Activated CD4-positive, alpha-beta T cell treated with anti-CD3 and anti-CD28 coated beads for 36 hours (primary cell): ENCODE measurements at regions of chr14 and their contacts with region 1.

Region 1: DNA sequence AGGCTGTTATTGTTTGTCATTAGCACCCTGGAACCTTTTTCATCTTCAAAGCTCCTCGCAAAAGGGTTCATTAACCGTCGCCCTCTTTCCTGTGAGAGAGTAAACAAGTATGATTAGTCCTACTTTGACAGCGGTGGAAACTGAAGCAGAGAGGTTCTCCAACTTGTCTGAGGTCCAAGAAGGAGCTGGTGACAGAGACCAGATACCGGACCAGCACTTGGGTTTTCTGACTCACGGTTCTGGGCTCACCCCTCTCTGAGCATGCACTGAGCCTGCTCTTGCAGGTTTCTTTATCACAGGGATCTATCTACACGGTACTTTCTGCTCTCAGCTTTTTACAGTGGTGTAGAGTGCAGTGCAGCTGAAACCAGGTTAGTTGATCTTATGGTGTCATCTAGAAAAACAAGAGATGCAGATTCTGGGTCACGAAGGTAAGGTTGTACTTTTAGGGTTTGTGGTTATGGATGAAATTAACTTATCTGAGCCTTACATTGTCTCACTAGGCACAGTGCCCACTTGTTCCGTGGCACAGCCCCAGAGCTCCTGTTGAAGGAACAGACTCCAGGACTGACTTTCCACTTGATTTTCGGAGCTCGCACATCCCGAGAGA is 62.1 kb downstream of the PPP2R5C start:
- DNase-seq: peak; percentile 87
- ATAC-seq: peak; percentile 80
- H3K4me3 Mint-ChIP-seq: peak overlapping the region; percentile 68
- H3K27ac Mint-ChIP-seq: peak overlapping the region; percentile 97
- H3K4me1 Mint-ChIP-seq: peaks cover 87% of the 10 kb centered on the region
- H3K27me3 Mint-ChIP-seq: no peaks in the 10 kb centered on the region

Region 2: DNA sequence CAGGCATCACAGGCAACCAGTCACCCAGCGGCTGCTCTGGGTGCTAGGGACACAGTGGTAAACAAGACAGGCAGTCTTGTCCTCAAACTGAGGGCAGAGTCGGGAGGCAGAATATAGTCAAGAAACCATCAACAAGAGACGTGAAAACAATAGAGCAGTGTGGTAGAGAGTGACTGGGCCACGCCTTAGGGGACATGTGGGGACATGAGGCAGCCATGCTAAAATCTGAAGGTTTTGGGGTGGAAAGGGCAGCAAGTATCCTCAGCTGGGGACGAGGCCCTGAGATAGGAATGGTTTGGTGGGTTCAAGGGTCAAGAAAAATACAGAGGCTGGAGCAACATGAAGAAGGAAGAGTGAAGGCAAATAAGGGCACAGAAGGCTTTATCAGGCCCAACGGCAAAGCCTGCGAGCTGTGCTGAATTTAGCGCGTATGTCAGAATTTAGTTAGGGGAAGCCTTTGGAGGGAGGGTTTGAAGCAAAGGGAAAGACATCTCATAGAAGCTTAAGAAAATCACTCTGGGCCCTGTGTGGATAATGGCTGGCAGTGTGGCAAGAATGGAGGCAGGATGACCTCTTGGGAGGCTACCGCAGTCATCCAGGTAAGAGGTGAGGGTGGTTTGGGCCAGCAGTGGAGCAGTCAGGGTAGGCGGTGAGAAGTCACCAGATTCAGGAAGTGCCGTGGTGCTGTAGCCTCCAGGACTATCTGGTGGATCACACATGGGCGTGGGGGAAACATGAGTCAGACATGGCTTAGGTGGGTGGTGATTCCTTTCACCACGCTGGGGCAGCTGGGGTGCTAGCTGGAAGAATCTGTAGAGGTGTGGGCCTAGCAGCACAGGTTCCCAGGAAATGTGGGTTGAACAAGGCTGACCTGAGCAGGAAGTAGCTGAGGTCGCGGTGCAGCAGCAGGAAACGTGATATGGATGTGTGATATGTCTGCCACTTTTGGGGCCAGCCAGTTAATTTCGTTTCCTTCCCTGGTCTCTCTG is 1755.4 kb before region 1 on chr14:
- CTCF ChIA-PET with region 1: no interaction called
- POLR2A ChIA-PET with region 1: interaction called, 4 read pairs
- intact Hi-C with region 1: loop called in 1 of 2 experiments (anchors 5 kb)
- DNase-seq: peak; percentile 93
- ATAC-seq: peak; percentile 38
- H3K4me3 Mint-ChIP-seq: peak overlapping the region; percentile 75
- H3K27ac Mint-ChIP-seq: peak overlapping the region; percentile 99
- H3K4me1 Mint-ChIP-seq: peaks cover 64% of the 10 kb centered on the region
- H3K27me3 Mint-ChIP-seq: no peaks in the 10 kb centered on the region

Region 3: DNA sequence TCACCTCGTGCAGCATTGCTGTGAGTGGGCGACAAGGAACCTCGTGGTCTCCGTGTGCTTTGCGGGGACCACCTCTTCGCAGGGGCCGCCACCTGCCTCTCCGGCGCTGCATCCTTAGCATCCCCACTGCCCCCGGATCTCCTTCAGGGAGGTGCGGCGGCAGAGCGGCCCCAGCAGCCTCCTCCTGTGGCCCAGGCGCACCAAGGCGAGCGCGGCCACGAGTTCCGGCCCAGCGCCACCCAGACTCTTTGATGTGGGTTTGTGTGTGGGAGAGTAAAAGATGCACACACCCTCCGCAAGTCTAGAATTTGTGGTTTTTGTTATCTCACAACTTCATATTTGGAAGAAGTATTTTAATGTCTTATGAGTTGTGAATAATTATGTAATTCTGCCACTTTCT is 381.2 kb before region 1 on chr14:
- CTCF ChIA-PET with region 1: no interaction called
- POLR2A ChIA-PET with region 1: no interaction called
- intact Hi-C with region 1: no loop called
- DNase-seq: peak; percentile 76
- ATAC-seq: peak; percentile 83
- H3K4me3 Mint-ChIP-seq: no peak overlapping the region
- H3K27ac Mint-ChIP-seq: no peak overlapping the region
- H3K4me1 Mint-ChIP-seq: peaks cover 25% of the 10 kb centered on the region
- H3K27me3 Mint-ChIP-seq: peaks cover 56% of the 10 kb centered on the region

Region 4: DNA sequence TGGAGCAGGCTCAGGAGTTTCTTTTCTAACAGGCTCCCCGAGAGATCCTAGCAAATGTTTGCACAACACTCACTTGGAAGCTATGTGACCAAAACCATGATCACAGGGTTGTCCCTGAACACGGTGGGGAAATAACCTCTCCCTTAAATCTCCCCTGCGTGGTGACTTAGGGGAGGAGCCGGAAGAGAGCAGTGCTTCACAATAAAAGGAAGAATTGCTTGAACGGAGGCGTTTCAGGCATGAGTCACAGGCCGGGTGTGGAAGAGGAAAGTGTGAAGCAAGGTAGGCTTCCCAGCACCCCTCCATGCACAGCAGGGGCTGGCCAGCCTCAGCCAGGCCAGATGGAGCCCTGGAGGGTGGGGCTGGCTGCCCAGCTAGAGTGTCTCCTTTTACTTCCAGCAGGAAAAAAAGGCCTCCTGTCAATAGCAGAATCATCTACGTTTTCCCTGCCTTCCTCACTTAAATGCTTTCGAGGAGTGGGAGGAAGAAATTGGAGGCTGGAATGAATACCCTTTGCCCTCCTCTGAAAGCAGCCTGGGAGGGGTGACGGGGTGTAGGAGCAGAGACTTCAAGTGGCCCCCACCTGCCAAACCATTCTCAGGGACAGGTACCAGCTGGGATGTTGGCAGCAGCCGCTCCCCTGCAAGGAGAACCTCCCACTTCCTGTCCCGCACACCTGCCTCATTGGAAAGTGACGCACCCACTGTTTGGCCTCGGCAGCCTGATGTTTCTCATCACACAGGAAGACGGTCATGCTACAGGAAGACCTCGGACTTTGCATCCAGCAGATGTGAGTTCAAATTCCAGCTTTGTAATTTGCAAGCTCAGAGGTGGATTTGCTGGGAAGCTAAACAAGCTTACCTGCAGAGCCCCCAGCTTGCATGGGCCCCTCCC is 92.2 kb before region 1 on chr14:
- CTCF ChIA-PET with region 1: interaction called, 3 read pairs
- POLR2A ChIA-PET with region 1: interaction called, 5 read pairs
- intact Hi-C with region 1: loop called in 1 of 2 experiments (anchors 1 kb)
- DNase-seq: peak; percentile 94
- ATAC-seq: peak; percentile 92
- H3K4me3 Mint-ChIP-seq: peak overlapping the region; percentile 66
- H3K27ac Mint-ChIP-seq: peak overlapping the region; percentile 97
- H3K4me1 Mint-ChIP-seq: peaks cover 64% of the 10 kb centered on the region
- H3K27me3 Mint-ChIP-seq: no peaks in the 10 kb centered on the region

Region 5: DNA sequence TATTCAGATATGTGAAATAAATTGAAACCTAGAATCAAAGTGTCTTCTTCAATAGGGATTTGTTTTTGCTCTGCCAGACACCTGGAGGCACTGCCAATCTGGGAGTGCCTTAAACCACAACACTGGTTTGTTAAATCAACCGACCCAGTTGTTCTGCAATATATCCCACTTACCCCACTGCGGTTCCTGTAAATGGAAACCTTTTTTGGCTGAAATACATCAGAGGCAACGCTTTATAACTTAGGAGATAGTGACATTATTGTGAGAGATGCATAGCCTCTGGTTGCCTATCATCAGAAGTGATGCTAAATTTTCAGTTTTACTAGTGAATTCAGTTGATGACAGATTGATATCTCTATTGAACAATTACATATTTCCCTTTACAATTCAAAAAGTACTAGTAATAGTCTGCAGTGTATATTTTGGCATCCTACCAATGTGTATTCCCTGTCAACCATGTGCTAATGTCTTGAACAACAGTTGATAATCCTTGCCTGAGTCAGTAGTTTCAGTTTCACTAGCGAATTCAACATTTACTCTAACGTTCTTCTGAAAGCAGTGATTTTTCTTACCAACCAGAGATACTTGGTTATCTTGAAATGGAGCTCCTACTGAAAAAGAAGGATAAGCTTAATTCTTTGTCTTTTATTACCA is 31.6 kb before region 1 on chr14:
- CTCF ChIA-PET with region 1: no interaction called
- POLR2A ChIA-PET with region 1: no interaction called
- intact Hi-C with region 1: loop called (anchors 1 to 2 kb)
- DNase-seq: no peak
- ATAC-seq: peak; percentile 92
- H3K4me3 Mint-ChIP-seq: peak overlapping the region; percentile 33
- H3K27ac Mint-ChIP-seq: peak overlapping the region; percentile 63
- H3K4me1 Mint-ChIP-seq: peaks cover 30% of the 10 kb centered on the region
- H3K27me3 Mint-ChIP-seq: no peaks in the 10 kb centered on the region

Region 6: DNA sequence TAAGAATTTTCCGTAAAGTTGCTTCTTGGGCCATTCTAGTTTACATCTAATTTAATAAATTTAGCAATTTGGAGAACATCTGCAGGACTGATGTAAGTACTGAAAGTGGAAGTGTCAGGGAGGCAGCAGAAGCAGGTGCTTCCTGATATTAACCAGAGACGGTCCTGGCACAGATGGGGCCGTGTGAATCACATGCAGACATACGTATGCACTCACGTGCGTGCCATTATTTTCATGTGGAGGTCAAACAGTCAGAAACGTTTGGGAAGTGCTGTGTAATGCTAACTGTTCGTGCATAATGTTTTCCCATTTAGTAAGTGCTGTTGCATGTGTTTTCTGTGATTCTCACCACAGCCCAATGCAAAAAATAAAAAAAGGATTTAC is 52.9 kb after region 1 on chr14:
- CTCF ChIA-PET with region 1: interaction called, 14 read pairs
- POLR2A ChIA-PET with region 1: interaction called, 47 read pairs
- intact Hi-C with region 1: loop called (anchors 1 kb)
- DNase-seq: peak; percentile 86
- ATAC-seq: peak; percentile 62
- H3K4me3 Mint-ChIP-seq: peak overlapping the region; percentile 66
- H3K27ac Mint-ChIP-seq: peak overlapping the region; percentile 94
- H3K4me1 Mint-ChIP-seq: peaks cover 91% of the 10 kb centered on the region
- H3K27me3 Mint-ChIP-seq: no peaks in the 10 kb centered on the region

Region 7: GRCh38 chr14:102187058-102187457 is 363.4 kb after region 1 on chr14:
- CTCF ChIA-PET with region 1: no interaction called
- POLR2A ChIA-PET with region 1: interaction called, 14 read pairs
- intact Hi-C with region 1: loop called in 1 of 2 experiments (anchors 5 kb)
- DNase-seq: no peak
- ATAC-seq: no peak
- H3K4me3 Mint-ChIP-seq: no peak overlapping the region
- H3K27ac Mint-ChIP-seq: peak overlapping the region; percentile 79
- H3K4me1 Mint-ChIP-seq: peaks cover 61% of the 10 kb centered on the region
- H3K27me3 Mint-ChIP-seq: no peaks in the 10 kb centered on the region